ENCODE measurements at regions of chr14 and their contacts with region 1.

Region 1: DNA sequence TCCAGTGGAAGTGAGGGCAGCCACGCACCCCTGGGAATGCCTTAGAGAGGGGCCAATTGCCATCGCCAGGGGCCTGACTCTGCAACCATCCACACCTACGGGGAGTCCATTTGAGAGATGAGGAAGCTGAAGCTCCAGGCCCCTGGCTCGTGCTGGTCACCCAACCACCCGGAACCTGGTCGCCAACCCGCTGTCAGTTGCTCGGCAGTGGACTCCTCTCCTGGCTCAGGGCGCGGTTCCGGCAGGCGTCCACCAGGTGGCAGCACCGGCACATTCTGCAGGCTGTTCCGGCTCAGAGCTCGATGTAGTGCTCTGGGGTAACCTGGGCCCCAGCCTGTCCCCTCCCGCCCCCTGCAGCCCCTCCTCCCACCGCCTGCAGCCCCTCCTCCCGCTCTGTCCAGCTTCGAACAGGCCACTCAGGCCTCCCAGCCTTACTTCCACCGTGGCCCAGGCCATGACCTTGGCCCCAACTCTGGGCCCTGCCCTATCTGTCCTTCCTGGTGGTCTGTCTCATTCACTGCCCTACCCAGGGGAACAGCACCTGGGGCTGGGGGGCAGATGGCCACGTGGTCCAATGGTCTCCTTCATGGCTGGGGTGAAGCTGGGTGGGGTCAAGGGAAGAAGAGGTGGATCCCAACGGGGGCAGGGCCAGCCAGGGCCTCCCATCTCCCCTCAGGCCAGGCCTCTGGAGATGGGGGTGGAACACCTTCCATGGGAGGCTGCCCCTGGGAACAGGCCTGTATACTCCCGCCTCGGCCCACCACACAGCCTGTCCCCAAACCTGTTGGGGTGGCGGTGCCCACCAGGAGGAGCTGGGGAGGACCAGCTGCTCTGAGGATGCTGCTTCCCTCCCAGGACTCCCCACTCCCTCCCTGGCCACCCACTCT is 15.7 kb downstream of the SIVA1 start:
- DNase-seq: peak; percentile 77
- H3K4me3 Mint-ChIP-seq: no peak overlapping the region
- H3K27ac Mint-ChIP-seq: no peak overlapping the region
- H3K4me1 Mint-ChIP-seq: no peaks in the 10 kb centered on the region
- H3K27me3 Mint-ChIP-seq: no peaks in the 10 kb centered on the region
- CTCF ChIP-seq: peak; percentile 96

Region 2: GRCh38 chr14:104708606-104709268 is 59.9 kb before region 1 on chr14:
- CTCF ChIA-PET with region 1: no interaction called
- POLR2A ChIA-PET with region 1: no interaction called
- intact Hi-C with region 1: no loop called
- DNase-seq: peak; percentile 72
- H3K4me3 Mint-ChIP-seq: no peak overlapping the region
- H3K27ac Mint-ChIP-seq: no peak overlapping the region
- H3K4me1 Mint-ChIP-seq: peaks cover 6% of the 10 kb centered on the region
- H3K27me3 Mint-ChIP-seq: no peaks in the 10 kb centered on the region
- CTCF ChIP-seq: peak; percentile 94

Region 3: DNA sequence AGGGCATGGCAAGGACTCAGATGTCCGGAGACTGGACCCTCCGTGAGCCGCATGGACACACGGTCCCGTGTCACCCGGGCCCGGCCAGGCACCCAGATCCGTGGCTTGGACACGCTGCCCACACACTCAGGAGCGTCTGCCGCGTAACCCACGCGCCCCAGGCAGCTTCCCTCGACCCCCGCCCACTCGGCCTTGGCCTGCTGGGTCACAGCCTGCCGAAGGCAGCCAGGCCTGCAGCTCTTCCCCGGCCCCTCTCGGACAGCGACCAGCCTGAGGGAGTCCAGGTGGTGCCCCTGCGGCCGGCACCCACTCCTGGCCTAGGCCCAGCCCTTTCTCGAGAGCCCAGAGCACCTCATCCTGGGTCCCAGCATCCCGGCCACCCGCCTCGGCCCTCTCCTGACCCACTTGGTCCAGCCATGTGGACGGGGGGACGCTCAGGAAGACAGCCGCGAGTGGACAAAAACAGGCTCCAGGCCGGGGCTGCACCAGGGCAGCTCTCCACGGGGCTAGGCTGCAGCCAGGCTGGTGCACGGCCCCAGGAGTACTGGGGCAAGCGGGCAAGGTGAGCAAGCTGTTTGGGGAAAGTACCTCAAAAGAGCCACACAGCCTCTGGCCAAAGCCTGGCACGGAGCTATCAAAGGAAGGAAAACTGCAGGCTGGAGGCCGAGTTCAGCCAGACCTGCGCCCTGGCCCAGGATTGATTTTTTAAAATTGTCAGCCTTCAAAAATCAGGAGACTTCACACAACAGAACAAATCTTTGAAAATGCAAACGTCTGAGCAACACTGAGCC is 20.4 kb after region 1 on chr14:
- CTCF ChIA-PET with region 1: interaction called, 11 read pairs
- POLR2A ChIA-PET with region 1: no interaction called
- intact Hi-C with region 1: no loop called
- DNase-seq: no peak
- H3K4me3 Mint-ChIP-seq: no peak overlapping the region
- H3K27ac Mint-ChIP-seq: no peak overlapping the region
- H3K4me1 Mint-ChIP-seq: peaks cover 27% of the 10 kb centered on the region
- H3K27me3 Mint-ChIP-seq: no peaks in the 10 kb centered on the region
- CTCF ChIP-seq: no peak

Region 4: GRCh38 chr14:104820669-104821228 is 52.1 kb after region 1 on chr14:
- CTCF ChIA-PET with region 1: interaction called, 26 read pairs
- POLR2A ChIA-PET with region 1: no interaction called
- intact Hi-C with region 1: loop called (anchors 1 kb)
- DNase-seq: peak; percentile 37
- H3K4me3 Mint-ChIP-seq: no peak overlapping the region
- H3K27ac Mint-ChIP-seq: no peak overlapping the region
- H3K4me1 Mint-ChIP-seq: no peaks in the 10 kb centered on the region
- H3K27me3 Mint-ChIP-seq: peaks cover 17% of the 10 kb centered on the region
- CTCF ChIP-seq: peak; percentile 17

Region 5: GRCh38 chr14:104826189-104826860 is 57.6 kb after region 1 on chr14:
- CTCF ChIA-PET with region 1: interaction called, 26 read pairs
- POLR2A ChIA-PET with region 1: interaction called, 3 read pairs
- intact Hi-C with region 1: loop called (anchors 1 kb)
- DNase-seq: peak; percentile 82
- H3K4me3 Mint-ChIP-seq: peak overlapping the region; percentile 73
- H3K27ac Mint-ChIP-seq: peak overlapping the region; percentile 46
- H3K4me1 Mint-ChIP-seq: peaks cover 6% of the 10 kb centered on the region
- H3K27me3 Mint-ChIP-seq: peaks cover 17% of the 10 kb centered on the region
- CTCF ChIP-seq: peak; percentile 94

Measured in MCF 10A (cell line).